Heart right ventricle (tissue), 16 donors: ENCODE measurements at regions of chr18 and their contacts with region 1.

Region 1: GRCh38 chr18:79679111-79679872 is at the start of gene CTDP1:
- DNase-seq: peak; percentile 98 to 99
- ATAC-seq: peak; percentile 98 to 99 (median 99)
- H3K4me3 ChIP-seq: peak within 1 kb of the TSS; percentile 66 to 97 (median 82)
- H3K27ac ChIP-seq: peak within 1 kb of the TSS; percentile 88 to 100 (median 97)
- H3K4me1 ChIP-seq: peaks cover 9 to 57% (median 31%) of the 10 kb centered on the region in 9 donors
- H3K27me3 ChIP-seq: no peaks in the 10 kb centered on the region
- CTCF ChIP-seq: no peak
- total RNA-seq, gene CTDP1: 6.8 to 12.5 (median 9.3) TPM

Region 2: GRCh38 chr18:79058007-79058406 is 621.3 kb before region 1 on chr18:
- intact Hi-C with region 1: no loop called
- DNase-seq: no peak
- ATAC-seq: no peak
- H3K4me3 ChIP-seq: no peak overlapping the region
- H3K27ac ChIP-seq: no peak overlapping the region
- H3K4me1 ChIP-seq: no peaks in the 10 kb centered on the region
- H3K27me3 ChIP-seq: peaks cover 0 to 9% (median 4%) of the 10 kb centered on the region in 7 donors
- CTCF ChIP-seq: no peak

Region 3: GRCh38 chr18:80108728-80109675 is 429.7 kb after region 1 on chr18 and contains the start of gene ADNP2:
- intact Hi-C with region 1: loop called in 2 of 10 experiments (anchors 10 kb)
- DNase-seq: peak; percentile 64 to 89
- ATAC-seq: peak; percentile 89 to 96 (median 94)
- H3K4me3 ChIP-seq: peak within 1 kb of the TSS; percentile 58 to 86 (median 74)
- H3K27ac ChIP-seq: peak within 1 kb of the TSS; percentile 78 to 96 (median 88)
- H3K4me1 ChIP-seq: peaks cover 0 to 40% (median 28%) of the 10 kb centered on the region in 9 donors
- H3K27me3 ChIP-seq: no peaks in the 10 kb centered on the region
- CTCF ChIP-seq: no peak
- total RNA-seq, gene ADNP2: 6.9 to 12.4 (median 10.9) TPM